Sigmoid colon (tissue), 7 donors: ENCODE measurements at regions of chr18 and their contacts with region 1.

Region 1: DNA sequence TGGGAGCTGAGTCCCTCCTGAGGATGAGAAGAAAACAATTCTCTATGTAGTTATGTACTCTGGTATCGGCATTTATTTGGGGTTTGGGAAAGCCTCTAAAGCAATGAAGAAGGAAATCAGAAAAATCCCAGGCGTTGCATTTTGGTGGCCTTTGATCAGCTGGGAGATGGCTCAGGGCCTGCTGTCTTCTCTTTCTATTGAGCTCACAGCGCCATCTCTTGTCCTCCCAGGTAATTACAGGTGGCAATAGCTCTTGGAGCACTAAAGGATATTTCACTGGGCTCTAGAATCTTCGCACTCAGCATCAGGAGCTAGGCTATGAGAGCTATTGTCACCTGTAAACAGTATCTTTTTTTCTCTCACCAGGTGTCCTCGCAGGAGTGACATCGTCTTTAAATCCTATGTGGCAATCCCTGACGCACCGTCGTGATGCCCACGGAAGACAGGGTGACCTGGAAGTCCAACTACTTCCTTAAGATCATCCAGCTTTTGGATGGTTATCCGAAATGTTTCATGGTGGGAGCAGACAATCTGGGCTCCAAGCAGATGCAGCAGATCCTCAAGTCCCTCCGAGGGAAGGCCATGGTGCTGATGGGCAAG is 76.1 kb upstream of the PMAIP1 start:
- DNase-seq: peak; percentile 87
- H3K4me3 ChIP-seq: no peak overlapping the region
- H3K27ac ChIP-seq: no peak overlapping the region
- H3K4me1 ChIP-seq: peaks cover 0 to 7% (median 0%) of the 10 kb centered on the region in 4 donors
- H3K27me3 ChIP-seq: no peaks in the 10 kb centered on the region
- CTCF ChIP-seq: peak; percentile 81 to 91 (median 86)
- EP300 ChIP-seq: no peak
- POLR2A ChIP-seq: no peak

Region 2: GRCh38 chr18:59249205-59249774 is 574.4 kb before region 1 on chr18:
- intact Hi-C with region 1: loop called (anchors 2 kb)
- DNase-seq: no peak
- H3K4me3 ChIP-seq: no peak overlapping the region
- H3K27ac ChIP-seq: no peak overlapping the region
- H3K4me1 ChIP-seq: peaks cover 0 to 3% (median 0%) of the 10 kb centered on the region in 4 donors
- H3K27me3 ChIP-seq: peaks cover 0 to 15% (median 0%) of the 10 kb centered on the region in 3 donors
- CTCF ChIP-seq: peak in 3 of 4 experiments; percentile 52 to 62 (median 59)
- EP300 ChIP-seq: no peak
- POLR2A ChIP-seq: no peak

Region 3: GRCh38 chr18:59308248-59308937 is 515.3 kb before region 1 on chr18:
- intact Hi-C with region 1: loop called (anchors 2 kb)
- DNase-seq: peak; percentile 83
- H3K4me3 ChIP-seq: peak overlapping the region in 3 of 4 donors; percentile 23 to 32 (median 27)
- H3K27ac ChIP-seq: no peak overlapping the region
- H3K4me1 ChIP-seq: peaks cover 0 to 10% (median 9%) of the 10 kb centered on the region in 4 donors
- H3K27me3 ChIP-seq: peaks cover 0 to 30% (median 0%) of the 10 kb centered on the region in 3 donors
- CTCF ChIP-seq: peak; percentile 43 to 75 (median 61)
- EP300 ChIP-seq: no peak
- POLR2A ChIP-seq: no peak

Region 4: DNA sequence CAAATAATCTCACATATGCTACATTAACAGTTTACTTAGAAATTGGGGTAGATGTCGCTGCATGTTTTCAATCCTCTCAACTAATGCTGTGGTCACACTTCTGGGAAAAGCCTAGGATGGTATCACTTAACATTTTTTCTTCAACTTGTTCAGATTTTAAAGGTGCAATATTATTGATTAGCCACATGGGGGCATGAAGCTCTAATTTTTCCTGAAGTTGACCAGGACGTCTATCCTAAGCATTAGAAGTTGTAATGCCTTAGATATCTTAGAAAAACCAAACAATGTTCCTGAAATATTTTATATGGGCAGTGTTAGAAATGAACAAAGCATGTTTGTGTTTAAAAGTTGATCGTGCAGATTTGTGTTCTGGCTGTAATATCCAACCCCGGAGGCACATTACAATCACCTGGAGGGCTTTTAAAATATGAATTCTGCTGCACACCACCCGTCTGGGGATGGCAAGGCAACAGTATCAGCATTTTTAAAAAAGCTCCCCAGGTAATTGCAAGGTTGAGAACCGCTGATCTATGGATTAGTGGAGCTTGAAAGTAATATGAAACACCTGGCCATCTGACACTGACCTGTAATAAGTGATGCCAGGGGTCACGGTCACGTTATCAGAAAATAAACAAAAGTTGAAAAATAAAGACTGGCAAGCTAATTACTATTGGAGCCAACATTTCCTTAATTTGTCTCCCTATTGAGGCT is 364.2 kb before region 1 on chr18:
- intact Hi-C with region 1: loop called (anchors 1 kb)
- DNase-seq: no peak
- H3K4me3 ChIP-seq: no peak overlapping the region
- H3K27ac ChIP-seq: peak overlapping the region in 1 of 4 donors; percentile 11
- H3K4me1 ChIP-seq: peaks cover 0 to 30% (median 22%) of the 10 kb centered on the region in 4 donors
- H3K27me3 ChIP-seq: no peaks in the 10 kb centered on the region
- CTCF ChIP-seq: peak; percentile 28 to 59 (median 44)
- EP300 ChIP-seq: no peak
- POLR2A ChIP-seq: no peak

Region 5: GRCh38 chr18:59536166-59536565 is 287.5 kb before region 1 on chr18:
- intact Hi-C with region 1: loop called (anchors 5 kb)
- DNase-seq: no peak
- H3K4me3 ChIP-seq: no peak overlapping the region
- H3K27ac ChIP-seq: no peak overlapping the region
- H3K4me1 ChIP-seq: peaks cover 0 to 18% (median 0%) of the 10 kb centered on the region in 4 donors
- H3K27me3 ChIP-seq: no peaks in the 10 kb centered on the region
- CTCF ChIP-seq: no peak
- EP300 ChIP-seq: no peak
- POLR2A ChIP-seq: no peak

Region 6: DNA sequence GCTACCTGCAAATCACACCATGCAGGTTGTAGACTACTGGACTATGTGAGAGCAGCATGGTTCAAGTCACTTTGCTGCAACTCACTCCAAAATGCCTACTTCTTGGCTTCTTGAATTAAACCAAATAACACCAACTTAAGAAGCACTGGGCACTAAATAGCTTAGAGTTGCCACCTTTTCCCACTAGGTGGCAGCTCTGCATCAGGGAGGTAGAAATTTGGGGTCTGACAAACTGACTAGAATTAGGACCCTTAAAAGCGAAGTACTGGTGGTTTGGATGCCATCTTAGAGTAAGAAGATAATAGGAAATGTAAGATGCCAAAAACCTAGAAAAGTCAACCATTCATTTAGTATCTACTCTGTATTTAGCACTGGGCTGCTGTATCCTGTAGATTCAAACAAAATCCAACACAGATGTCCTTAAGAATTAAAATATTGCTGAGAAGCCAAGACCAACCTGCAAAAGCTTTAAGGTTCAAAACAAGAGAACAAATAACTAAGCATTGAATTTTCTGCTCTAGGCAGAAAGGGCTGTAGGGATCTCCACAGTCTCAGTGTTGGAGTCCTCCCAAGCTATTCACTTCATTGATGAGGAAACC is 192.0 kb before region 1 on chr18:
- intact Hi-C with region 1: loop called (anchors 1 kb)
- DNase-seq: no peak
- H3K4me3 ChIP-seq: no peak overlapping the region
- H3K27ac ChIP-seq: peak overlapping the region in 3 of 4 donors; percentile 68 to 81 (median 79)
- H3K4me1 ChIP-seq: peaks cover 0 to 84% (median 56%) of the 10 kb centered on the region in 4 donors
- H3K27me3 ChIP-seq: no peaks in the 10 kb centered on the region
- CTCF ChIP-seq: peak; percentile 12 to 59 (median 52)
- EP300 ChIP-seq: no peak
- POLR2A ChIP-seq: no peak

Region 7: GRCh38 chr18:59848002-59848401 is 24.3 kb after region 1 on chr18:
- intact Hi-C with region 1: no loop called
- DNase-seq: no peak
- H3K4me3 ChIP-seq: no peak overlapping the region
- H3K27ac ChIP-seq: no peak overlapping the region
- H3K4me1 ChIP-seq: peaks cover 0 to 28% (median 13%) of the 10 kb centered on the region in 4 donors
- H3K27me3 ChIP-seq: no peaks in the 10 kb centered on the region
- CTCF ChIP-seq: no peak
- EP300 ChIP-seq: no peak
- POLR2A ChIP-seq: no peak